ENCODE measurements at regions of chr22 and their contacts with region 1.

Region 1: GRCh38 chr22:46057762-46058420 is 80.9 kb upstream of the WNT7B start:
- DNase-seq: peak; percentile 66
- ATAC-seq: peak; percentile 82
- H3K4me3 Mint-ChIP-seq: peak overlapping the region; percentile 28
- H3K27ac Mint-ChIP-seq: peak overlapping the region; percentile 79
- H3K4me1 Mint-ChIP-seq: peaks cover 48% of the 10 kb centered on the region
- H3K27me3 Mint-ChIP-seq: no peaks in the 10 kb centered on the region

Region 2: DNA sequence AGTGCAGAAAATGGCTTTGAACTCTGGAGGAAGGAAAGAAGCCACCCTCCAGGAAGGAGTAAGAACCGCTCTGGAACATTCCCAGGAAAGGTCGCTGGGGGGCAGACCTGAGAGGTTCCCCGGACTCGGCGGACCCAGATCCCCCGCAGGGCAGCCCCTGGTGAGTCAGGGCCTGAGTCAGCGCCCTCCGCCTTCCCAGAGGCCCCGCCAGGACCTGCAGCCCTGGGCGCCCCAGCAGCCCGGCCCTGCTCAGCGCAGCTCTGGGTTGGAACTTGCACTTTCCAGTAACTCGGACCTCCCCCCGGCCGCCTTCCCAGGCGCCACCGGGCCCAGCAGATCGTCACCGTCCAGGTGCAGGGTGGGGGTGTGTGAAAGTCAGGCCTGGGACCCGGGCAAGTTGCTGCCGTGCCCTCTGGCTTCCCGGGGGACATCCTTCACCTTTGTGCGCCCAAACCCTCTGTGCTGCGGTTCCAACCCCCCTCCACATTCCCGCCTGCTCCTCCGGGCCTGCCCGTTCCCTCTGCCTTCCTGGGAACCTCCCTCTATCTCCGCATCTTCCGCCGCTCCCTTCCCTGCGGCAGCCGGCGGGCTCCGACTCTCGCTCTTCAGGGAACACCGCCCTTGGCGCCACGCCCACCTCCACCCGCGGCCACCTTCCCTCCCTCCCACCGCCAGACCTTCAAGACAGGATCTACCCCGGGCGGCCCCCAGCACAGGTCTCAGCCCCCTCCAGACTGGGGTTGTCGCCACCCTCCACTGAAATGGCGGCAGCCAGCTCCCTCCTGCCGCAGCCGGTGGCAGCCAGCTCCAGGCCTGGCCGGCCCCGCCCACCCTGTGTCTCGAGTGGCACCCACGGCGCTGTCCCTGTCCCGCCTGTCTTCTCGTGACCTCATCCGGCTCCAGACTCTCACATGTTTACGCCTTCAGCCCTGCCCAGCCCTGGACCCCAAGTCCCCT is 44.2 kb before region 1 on chr22:
- CTCF ChIA-PET with region 1: no interaction called
- POLR2A ChIA-PET with region 1: interaction called, 5 read pairs
- intact Hi-C with region 1: loop called in 1 of 2 experiments (anchors 1 kb)
- DNase-seq: peak; percentile 96
- ATAC-seq: peak; percentile 99
- H3K4me3 Mint-ChIP-seq: peak overlapping the region; percentile 80
- H3K27ac Mint-ChIP-seq: peak overlapping the region; percentile 86
- H3K4me1 Mint-ChIP-seq: peaks cover 4% of the 10 kb centered on the region
- H3K27me3 Mint-ChIP-seq: no peaks in the 10 kb centered on the region

Region 3: GRCh38 chr22:46079861-46080821 is 22.2 kb after region 1 on chr22:
- CTCF ChIA-PET with region 1: no interaction called
- POLR2A ChIA-PET with region 1: no interaction called
- intact Hi-C with region 1: no loop called
- DNase-seq: no peak
- ATAC-seq: no peak
- H3K4me3 Mint-ChIP-seq: no peak overlapping the region
- H3K27ac Mint-ChIP-seq: no peak overlapping the region
- H3K4me1 Mint-ChIP-seq: peaks cover 7% of the 10 kb centered on the region
- H3K27me3 Mint-ChIP-seq: no peaks in the 10 kb centered on the region